Activated T-helper 2 cell treated with anti-CD3 and anti-CD28 coated beads, Interferon-gamma antibody, Interleukin-2, Interleukin-4, amounts not matched to agents 10 μg/mL and 5 μg/mL and 100 μg/mL, durations not matched to agents 14 hours and 24 hours and 36 hours (primary cell): ENCODE measurements at regions of chr15 and their contacts with region 1.

Region 1: DNA sequence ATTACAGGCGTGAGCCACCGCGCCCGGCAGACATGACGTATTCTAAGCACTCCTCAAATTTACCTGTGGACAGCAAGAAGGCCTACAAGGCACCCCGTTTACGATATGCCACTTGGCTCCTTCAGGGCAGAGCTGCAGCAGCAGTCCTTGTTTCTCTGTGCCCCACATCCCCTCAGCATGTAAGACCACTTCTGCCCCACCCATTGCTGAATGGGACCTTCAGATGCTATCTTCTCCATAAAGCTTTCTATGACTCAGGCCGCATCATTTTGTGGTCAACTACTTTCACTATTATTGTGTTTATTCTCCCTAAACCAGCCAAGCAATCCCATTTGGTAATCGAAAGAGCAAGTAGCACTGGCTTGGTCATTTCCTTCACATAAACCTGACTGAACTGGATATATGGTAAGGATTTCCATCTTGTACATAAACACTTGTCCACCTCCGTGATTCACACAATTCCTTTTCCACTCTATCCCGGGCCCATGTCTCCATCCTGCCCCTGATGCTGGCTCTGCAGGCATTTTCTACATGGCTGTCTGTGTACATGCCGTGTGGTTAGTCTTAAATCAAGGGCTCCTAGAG is 25.7 kb downstream of the LIPC start:
- DNase-seq: peak; percentile 54
- H3K4me3 Mint-ChIP-seq: no peak overlapping the region
- H3K27ac Mint-ChIP-seq: peak overlapping the region; percentile 91
- H3K4me1 Mint-ChIP-seq: peaks cover 78% of the 10 kb centered on the region
- H3K27me3 Mint-ChIP-seq: no peaks in the 10 kb centered on the region

Region 2: DNA sequence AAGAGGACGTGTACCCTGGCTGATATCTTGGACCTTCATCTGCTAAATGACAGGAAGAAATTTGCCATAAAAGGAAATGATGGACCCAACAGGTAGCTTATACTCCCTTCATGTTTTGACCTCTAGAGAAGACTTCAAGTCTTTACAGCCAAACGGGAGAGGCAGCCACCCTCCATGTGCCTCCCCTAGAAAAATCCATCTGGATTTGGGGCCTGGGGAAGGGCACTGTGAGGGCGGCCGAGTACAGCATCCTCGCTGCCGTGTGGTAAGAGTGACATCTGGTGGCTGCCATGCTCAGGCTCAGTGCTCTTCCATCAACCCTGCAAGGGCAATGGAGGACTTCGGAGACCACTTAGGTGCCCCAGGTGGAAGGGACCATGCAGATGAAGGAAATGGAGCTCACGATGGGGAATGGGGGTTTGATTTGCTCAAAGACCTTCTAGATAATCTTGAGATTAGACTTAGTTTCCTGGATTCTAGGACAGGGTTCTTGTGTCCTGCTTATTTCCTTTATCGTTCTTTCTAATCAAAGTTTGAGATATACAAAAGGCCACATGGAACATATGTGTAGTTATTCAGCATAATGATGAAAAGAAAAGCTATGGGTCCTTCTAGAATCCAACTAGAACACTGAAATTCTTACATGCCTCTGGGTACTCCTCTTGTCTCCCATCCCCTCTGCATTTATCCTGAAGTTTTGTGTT is 274.9 kb before region 1 on chr15:
- intact Hi-C with region 1: no loop called
- DNase-seq: peak; percentile 10
- H3K4me3 Mint-ChIP-seq: no peak overlapping the region
- H3K27ac Mint-ChIP-seq: no peak overlapping the region
- H3K4me1 Mint-ChIP-seq: peaks cover 8% of the 10 kb centered on the region
- H3K27me3 Mint-ChIP-seq: peaks cover 22% of the 10 kb centered on the region

Region 3: GRCh38 chr15:58331903-58332675 is 125.4 kb before region 1 on chr15:
- intact Hi-C with region 1: loop called (anchors 1 kb)
- DNase-seq: peak; percentile 76
- H3K4me3 Mint-ChIP-seq: peak overlapping the region; percentile 32
- H3K27ac Mint-ChIP-seq: peak overlapping the region; percentile 96
- H3K4me1 Mint-ChIP-seq: peaks cover 43% of the 10 kb centered on the region
- H3K27me3 Mint-ChIP-seq: no peaks in the 10 kb centered on the region

Region 4: DNA sequence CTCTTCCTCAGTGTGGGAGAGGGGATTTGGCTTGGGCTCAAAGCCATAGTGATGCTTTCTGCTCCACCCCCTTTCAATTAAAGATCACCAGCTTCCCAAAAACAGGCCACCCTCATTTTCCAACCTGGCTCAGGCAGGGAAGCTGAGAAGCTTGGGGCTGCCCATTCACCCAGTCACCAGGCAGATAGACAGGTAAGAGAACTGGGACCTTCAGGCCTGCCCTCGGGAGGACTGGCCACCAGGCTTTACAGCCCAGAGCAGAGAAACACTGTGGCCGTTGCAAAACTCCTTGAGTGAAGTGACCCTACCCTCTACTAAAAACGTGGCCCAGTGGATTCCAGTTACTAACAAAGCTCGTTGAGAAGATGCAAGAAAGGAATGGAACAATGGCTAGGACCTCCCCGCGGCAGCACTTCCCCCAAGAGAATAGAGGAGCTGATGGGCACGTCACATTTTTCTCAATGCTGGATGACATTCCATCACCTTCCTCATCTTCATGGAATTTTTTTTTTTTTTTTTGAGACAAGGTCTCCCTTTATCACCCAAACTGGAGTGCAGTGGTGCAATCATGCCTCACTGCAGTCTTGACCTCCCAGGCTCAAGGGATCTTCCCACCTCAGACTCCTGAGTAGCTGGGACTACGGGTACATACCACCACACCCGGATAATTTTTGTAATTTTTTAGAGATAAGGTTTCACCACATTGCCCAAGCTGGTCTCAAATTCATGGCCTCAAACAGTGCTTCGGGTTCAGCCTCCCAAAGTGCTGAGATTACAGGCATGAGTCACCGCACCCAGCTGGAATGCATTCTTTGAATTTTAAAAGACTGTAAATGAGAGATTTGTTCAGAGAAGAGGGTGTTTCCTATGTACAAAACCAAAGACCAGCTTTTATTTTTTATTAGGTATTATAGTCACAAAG is 12.2 kb after region 1 on chr15:
- intact Hi-C with region 1: loop called (anchors 1 kb)
- DNase-seq: no peak
- H3K4me3 Mint-ChIP-seq: no peak overlapping the region
- H3K27ac Mint-ChIP-seq: no peak overlapping the region
- H3K4me1 Mint-ChIP-seq: peaks cover 48% of the 10 kb centered on the region
- H3K27me3 Mint-ChIP-seq: no peaks in the 10 kb centered on the region

Region 5: DNA sequence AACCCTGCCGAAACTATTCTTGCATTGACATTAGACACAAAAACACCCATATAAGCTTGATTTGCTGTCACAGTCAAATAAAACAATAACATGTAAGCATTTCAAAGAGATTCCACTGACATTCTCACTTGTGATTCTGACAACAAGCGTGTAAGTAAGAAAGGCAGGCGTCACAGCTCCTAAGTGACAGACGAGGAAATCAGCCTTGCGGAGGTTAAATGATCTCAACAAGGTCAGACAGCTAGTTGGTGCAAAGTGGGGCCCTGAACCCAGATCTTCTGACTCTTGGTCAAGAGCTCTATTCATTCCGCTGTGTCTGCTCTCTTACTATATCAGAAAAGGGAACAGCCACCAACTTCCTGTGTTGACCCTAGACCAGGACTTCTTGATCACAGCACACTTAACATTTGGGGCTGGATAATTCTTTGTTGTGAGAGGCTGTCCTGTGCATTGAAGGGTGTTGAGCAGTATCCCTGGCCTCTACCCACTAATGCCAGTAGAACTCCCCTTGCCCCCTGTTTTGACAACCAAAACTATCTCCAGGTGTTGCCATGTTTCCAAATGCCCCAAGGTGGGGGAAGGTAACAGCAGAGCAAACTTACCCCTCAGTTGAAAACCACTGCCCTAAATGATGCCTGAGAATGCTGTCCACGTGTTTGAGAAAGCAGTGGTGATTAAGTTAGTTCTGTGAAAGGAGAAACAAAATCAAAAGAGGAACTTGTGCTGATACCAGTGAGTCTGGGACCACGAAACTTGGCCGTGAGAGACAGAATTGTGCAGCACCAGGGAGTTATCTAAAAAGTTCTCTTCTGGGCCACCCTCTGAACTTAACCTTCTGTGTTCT is 60.4 kb after region 1 on chr15:
- intact Hi-C with region 1: loop called (anchors 1 kb)
- DNase-seq: no peak
- H3K4me3 Mint-ChIP-seq: peak overlapping the region; percentile 18
- H3K27ac Mint-ChIP-seq: peak overlapping the region; percentile 84
- H3K4me1 Mint-ChIP-seq: peaks cover 54% of the 10 kb centered on the region
- H3K27me3 Mint-ChIP-seq: no peaks in the 10 kb centered on the region

Region 6: DNA sequence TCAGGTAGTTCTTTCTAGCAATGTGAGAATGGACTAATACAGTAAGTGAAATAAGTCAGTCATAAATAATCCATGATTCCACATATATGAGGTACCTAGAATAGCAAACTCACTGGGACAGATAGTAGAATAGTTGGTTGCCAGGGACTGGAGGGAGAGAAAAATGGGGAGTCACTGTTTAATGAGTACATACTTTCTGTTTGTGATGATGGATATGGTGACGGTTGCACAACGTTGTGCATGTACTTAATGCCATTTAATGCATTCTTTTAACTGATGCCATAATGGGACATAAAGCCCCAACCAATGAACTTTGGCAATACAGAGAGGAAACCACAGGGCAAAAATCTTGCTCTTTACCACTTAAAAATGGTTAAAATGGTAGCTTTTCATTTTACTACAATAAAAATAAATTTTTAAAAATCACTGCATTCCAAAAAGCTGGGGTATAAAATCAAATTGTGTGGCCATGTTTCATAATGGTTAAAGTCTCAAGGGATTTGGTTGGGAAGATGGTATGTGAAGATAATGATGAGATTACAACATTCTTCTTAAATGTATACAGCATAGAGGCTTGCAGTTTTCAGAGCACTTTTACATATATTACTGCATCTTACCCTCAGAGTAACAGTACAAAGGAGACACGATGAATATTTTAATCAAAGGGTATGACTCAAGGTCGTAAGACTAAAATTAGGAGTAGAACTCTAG is 246.8 kb after region 1 on chr15:
- intact Hi-C with region 1: loop called (anchors 1 kb)
- DNase-seq: no peak
- H3K4me3 Mint-ChIP-seq: no peak overlapping the region
- H3K27ac Mint-ChIP-seq: no peak overlapping the region
- H3K4me1 Mint-ChIP-seq: peaks cover 71% of the 10 kb centered on the region
- H3K27me3 Mint-ChIP-seq: no peaks in the 10 kb centered on the region

Region 7: GRCh38 chr15:58749532-58750337 is 292.3 kb after region 1 on chr15 and contains the start of gene ADAM10:
- intact Hi-C with region 1: loop called (anchors 5 kb)
- DNase-seq: peak; percentile 97
- H3K4me3 Mint-ChIP-seq: peak within 1 kb of the TSS; percentile 96
- H3K27ac Mint-ChIP-seq: peak within 1 kb of the TSS; percentile 99
- H3K4me1 Mint-ChIP-seq: peaks cover 32% of the 10 kb centered on the region
- H3K27me3 Mint-ChIP-seq: no peaks in the 10 kb centered on the region
- total RNA-seq, gene ADAM10: 136 and 141 TPM in 2 replicates